Dorsolateral prefrontal cortex (tissue), 120 donors: ENCODE measurements at regions of chr2 and their contacts with region 1.

Region 1: GRCh38 chr2:238239872-238240751 is at the start of gene HES6:
- DNase-seq: peak; percentile 75 to 91 (median 88)
- H3K4me3 ChIP-seq: peak within 1 kb of the TSS; percentile 40 to 84 (median 69)
- H3K27ac ChIP-seq: peak within 1 kb of the TSS in 31 of 59 donors; percentile 2 to 76 (median 60)
- H3K27me3 ChIP-seq: peaks cover 0 to 4% (median 0%) of the 10 kb centered on the region in 45 donors
- CTCF ChIP-seq: peak in 20 of 56 donors; percentile 2 to 62 (median 26)
- total RNA-seq, gene HES6: 16.3 to 92.6 (median 39.4) TPM

Region 2: DNA sequence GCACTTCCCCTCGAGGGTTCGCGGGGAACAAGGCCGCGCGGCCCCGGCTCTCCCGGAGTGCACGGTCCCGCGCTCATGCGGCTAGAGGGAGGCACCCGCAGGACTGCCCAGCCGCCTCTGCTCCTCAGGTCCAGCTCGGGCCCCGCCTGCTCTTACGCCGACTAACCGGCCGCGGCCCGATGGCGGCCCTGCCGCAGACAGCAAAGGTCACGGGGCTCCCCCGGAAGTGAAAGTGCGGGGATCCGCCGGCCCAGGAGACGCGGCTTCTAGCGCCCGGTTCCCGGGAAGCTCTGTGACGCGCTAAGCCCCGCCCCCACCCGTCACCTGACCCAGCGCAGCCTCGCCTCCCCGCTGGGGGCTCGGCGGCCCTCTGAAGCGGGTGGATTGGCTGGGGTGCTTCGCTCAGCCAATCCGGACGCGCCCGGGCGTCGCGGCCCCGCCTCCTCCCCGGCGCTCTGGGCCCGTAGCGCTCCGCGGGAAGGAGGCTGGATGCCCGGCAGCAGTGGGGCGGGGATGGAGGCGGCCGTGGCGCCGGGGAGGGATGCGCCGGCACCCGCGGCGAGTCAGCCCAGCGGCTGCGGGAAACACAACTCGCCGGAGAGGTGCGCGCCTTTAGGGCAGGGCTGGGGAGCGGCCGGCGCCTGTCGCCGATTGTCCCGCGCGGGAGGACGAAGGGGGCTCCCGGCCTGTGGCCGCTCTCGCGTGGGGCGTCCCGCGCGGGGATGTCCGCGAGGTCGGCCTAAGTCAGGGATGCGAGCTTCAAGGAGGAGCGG is 179.4 kb before region 1 on chr2 and contains the start of gene SCLY:
- intact Hi-C with region 1: loop called in 1 of 2 experiments (anchors 10 kb)
- DNase-seq: peak; percentile 96 to 99 (median 98)
- H3K4me3 ChIP-seq: peak within 1 kb of the TSS; percentile 78 to 99 (median 95)
- H3K27ac ChIP-seq: peak within 1 kb of the TSS; percentile 64 to 96 (median 90)
- H3K27me3 ChIP-seq: no peaks in the 10 kb centered on the region
- CTCF ChIP-seq: peak in 32 of 56 donors; percentile 9 to 57 (median 26)
- total RNA-seq, gene SCLY: 12.6 to 37.0 (median 22.2) TPM

Region 3: DNA sequence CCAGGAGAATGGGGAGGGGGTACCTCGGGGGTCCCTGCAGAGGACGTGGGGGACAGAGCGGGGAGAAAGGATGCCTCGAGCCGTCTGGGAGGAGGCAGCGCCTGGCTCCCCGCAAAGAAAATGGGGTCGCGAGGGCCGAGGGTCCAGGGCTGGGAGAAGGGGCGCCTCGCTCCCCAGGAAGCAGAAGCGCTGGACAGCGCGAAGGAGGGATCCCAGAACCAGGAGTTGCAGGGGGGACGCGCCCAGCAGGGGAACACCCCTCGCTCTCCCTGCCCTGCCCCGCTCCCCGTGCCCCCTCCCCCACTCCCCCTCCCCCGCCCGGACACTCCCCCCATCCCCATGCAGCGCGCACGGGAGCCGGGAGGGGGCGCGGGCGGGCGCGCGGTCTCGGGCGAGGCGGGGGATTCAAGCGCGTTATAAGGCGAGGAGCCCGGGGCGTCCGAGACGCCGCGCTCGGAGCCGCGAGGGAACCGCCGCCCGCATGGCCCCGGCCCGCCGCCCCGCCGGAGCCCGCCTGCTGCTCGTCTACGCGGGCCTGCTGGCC is 81.5 kb before region 1 on chr2 and contains the start of gene ERFE:
- intact Hi-C with region 1: loop called (anchors 5 to 10 kb)
- DNase-seq: peak in 1 of 10 donors; percentile 64
- H3K4me3 ChIP-seq: peak within 1 kb of the TSS in 37 of 59 donors; percentile 3 to 56 (median 31)
- H3K27ac ChIP-seq: no peak within 1 kb of the TSS
- H3K27me3 ChIP-seq: peaks cover 0 to 29% (median 4%) of the 10 kb centered on the region in 45 donors
- CTCF ChIP-seq: peak in 54 of 56 donors; percentile 15 to 66 (median 47)
- total RNA-seq, gene ERFE: 0.35 to 6.8 (median 2.2) TPM

Region 4: DNA sequence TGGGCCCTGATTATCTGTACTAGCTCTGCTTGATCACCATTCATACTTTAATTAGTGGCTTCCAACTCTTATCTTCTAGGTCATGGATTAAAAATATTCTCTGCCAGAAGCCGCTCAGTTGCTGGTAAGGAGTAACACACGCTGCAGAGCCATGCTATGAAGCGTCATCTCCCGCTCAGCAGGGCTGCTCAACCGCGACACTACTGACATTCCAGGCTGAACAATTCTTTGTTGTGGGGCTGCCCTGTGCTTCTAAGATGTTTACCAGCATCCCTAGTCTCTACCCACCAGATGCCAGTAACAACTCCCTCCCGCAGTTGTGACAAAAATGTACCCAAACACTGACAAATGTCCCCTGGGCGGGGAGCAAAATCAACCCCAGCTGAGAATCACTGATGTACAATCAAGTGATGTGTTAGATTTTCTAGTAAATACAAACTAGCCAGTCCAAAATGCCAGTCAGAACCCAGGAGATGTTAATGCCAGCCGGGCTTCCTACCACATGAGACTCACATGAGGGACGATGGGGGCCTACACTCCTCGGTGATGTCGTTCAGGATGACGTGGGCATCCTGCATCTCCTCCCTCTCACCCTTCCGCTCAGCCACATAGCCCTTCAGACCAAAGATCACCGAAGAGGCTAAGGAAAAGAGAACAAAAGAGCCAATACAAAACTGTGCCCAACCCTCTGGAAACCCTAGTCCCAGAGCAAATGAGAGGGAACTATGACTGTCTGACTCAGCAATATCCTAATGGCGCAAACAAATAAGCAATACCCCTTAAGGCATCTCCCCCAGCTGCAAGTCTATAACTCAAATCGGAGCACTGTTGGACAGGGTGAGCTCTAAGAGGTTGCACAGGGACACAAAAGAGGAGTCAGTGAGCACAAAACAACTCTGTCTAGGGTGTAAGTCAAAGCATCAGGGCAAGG is 52.2 kb before region 1 on chr2:
- intact Hi-C with region 1: loop called in 1 of 2 experiments (anchors 10 kb)
- DNase-seq: peak in 2 of 10 donors; percentile 43 to 46
- H3K4me3 ChIP-seq: peak overlapping the region in 3 of 59 donors; percentile 6 to 43 (median 8)
- H3K27ac ChIP-seq: peak overlapping the region in 58 of 59 donors; percentile 18 to 94 (median 84)
- H3K27me3 ChIP-seq: no peaks in the 10 kb centered on the region
- CTCF ChIP-seq: no peak

Region 5: GRCh38 chr2:238203094-238203972 is 36.8 kb before region 1 on chr2 and contains the start of gene ILKAP:
- intact Hi-C with region 1: loop called (anchors 5 kb)
- DNase-seq: peak; percentile 70 to 94 (median 85)
- H3K4me3 ChIP-seq: peak within 1 kb of the TSS; percentile 54 to 96 (median 79)
- H3K27ac ChIP-seq: peak within 1 kb of the TSS; percentile 73 to 98 (median 93)
- H3K27me3 ChIP-seq: no peaks in the 10 kb centered on the region
- CTCF ChIP-seq: peak in 9 of 56 donors; percentile 7 to 33 (median 23)
- total RNA-seq, gene ILKAP: 44.0 to 90.8 (median 62.7) TPM